ENCODE measurements at regions of chr21 and their contacts with region 1.

Region 1: GRCh38 chr21:35011681-35012080 is 37.4 kb downstream of the RUNX1 start:
- DNase-seq: no peak
- ATAC-seq: no peak
- H3K4me3 ChIP-seq: no peak overlapping the region
- H3K27ac ChIP-seq: no peak overlapping the region
- H3K4me1 ChIP-seq: peaks cover 0 to 14% of the 10 kb centered on the region in 2 donors
- H3K27me3 ChIP-seq: no peaks in the 10 kb centered on the region
- CTCF ChIP-seq: no peak

Region 2: GRCh38 chr21:34926803-34927467 is 84.7 kb before region 1 on chr21:
- intact Hi-C with region 1: loop called in 1 of 2 experiments (anchors 10 kb)
- DNase-seq: no peak
- ATAC-seq: peak; percentile 58
- H3K4me3 ChIP-seq: no peak overlapping the region
- H3K27ac ChIP-seq: no peak overlapping the region
- H3K4me1 ChIP-seq: peaks cover 0 to 10% of the 10 kb centered on the region in 2 donors
- H3K27me3 ChIP-seq: no peaks in the 10 kb centered on the region
- CTCF ChIP-seq: no peak

Measured in left lung (tissue), 14 donors.